ENCODE measurements at regions of chr11 and their contacts with region 1.

Region 1: DNA sequence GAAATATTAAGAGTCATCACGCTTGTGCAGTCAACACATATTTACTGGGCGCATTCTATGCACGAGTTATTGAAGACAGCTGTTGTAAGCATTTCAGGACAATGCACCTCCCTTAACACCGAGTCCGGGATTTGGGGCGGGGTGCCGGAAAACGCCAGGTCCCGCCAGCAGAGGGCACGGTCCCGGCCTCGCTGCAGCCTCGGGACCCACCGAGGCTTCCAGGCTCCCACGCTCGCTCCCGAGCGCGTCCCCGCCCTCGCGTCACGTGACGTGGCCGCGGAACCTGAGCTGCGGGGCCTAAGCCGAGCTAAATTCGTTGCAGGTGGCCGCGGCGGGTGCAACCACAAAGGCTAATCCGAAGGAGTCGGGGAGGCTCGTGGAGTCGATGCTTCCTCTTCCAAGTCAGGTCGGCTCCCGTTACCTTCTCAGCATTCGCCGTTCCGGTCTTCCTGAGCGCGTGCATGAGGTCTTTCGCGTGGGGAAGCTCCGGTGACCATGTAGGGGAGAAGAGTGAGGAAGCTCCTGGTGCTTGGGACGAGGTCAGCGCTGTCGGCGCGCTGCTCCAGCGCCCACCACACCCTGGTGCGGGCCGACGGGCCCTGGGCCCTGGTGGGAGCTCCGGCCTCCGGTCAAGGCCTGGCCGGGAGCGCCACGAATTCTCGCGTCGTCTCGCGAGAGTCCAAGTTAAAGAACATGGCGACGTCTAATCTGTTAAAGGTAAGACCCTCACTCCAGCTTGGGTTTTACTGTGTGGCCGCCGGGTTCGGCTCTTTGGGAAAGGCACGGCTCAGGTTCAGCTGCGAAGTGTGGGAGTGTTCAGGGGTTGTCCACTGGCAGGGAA is at the start of gene CUL5:
- DNase-seq: peak; percentile 53 to 93
- H3K4me3 ChIP-seq: peak within 1 kb of the TSS; percentile 80 to 84
- H3K27ac ChIP-seq: peak within 1 kb of the TSS; percentile 97 to 99
- H3K4me1 ChIP-seq: peaks cover 4 to 10% of the 10 kb centered on the region in 2 donors
- H3K27me3 ChIP-seq: no peaks in the 10 kb centered on the region
- CTCF ChIP-seq: peak; percentile 79 to 95 (median 85)
- total RNA-seq, gene CUL5: 6.0 TPM

Region 2: DNA sequence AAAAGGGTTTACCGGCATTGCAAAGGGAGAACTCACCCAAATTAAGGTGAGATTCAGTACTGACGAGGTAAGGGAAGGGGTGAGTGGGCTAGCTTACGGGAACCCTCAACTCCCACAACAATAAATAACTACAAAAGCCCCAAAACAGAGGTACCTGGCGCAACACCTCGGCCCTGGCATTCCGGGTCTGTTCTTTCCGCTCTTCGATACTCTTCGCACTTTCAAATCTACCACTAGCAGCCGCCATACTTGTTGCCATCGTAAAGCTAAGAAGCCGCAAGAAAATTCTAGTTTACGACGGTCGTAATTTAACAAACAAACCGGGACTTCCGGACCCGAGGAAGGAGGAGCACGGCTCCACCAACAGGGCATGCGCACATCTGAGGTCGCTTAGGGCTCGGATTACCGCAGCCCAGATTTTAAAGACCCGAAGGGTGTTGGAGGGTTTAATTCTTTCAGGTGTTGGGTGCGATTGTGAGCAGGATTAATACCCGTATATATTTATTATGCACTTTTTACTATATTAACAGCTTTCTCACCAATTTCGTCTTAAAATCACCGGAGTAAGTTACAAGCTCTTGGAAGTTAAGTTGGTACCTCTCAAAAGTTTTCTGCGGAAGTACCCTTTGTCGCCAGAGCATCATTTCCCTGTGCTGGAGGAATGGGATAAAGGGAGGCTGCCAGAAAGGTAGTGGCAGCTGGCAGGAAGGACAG is 551.2 kb before region 1 on chr11 and contains the start of gene CWF19L2:
- intact Hi-C with region 1: loop called (anchors 2 kb)
- DNase-seq: peak; percentile 33 to 93
- H3K4me3 ChIP-seq: peak within 1 kb of the TSS; percentile 73 to 81
- H3K27ac ChIP-seq: peak within 1 kb of the TSS; percentile 74 to 75
- H3K4me1 ChIP-seq: no peaks in the 10 kb centered on the region
- H3K27me3 ChIP-seq: no peaks in the 10 kb centered on the region
- CTCF ChIP-seq: no peak
- total RNA-seq, gene CWF19L2: 10.2 TPM

Region 3: DNA sequence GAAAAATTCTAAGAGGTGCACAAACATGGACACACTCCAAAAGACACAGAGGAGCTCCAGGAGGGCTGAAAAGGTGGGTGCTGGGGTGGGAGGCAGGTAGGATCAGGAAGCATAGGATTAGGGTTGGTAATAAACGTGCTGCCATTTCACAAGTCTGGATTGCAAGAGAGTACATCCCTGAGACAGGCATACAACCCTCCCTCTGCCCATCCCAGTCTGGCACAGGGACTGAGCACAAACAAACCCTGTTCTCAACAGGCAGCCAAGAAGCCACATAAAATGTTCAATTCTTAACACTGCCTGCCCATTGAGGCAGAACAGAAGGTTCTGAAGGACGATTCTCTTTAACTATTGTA is 168.8 kb before region 1 on chr11:
- intact Hi-C with region 1: loop called (anchors 5 kb)
- DNase-seq: no peak
- H3K4me3 ChIP-seq: peak overlapping the region in 1 of 2 donors; percentile 55
- H3K27ac ChIP-seq: peak overlapping the region; percentile 93
- H3K4me1 ChIP-seq: peaks cover 6 to 15% of the 10 kb centered on the region in 2 donors
- H3K27me3 ChIP-seq: no peaks in the 10 kb centered on the region
- CTCF ChIP-seq: no peak

Region 4: DNA sequence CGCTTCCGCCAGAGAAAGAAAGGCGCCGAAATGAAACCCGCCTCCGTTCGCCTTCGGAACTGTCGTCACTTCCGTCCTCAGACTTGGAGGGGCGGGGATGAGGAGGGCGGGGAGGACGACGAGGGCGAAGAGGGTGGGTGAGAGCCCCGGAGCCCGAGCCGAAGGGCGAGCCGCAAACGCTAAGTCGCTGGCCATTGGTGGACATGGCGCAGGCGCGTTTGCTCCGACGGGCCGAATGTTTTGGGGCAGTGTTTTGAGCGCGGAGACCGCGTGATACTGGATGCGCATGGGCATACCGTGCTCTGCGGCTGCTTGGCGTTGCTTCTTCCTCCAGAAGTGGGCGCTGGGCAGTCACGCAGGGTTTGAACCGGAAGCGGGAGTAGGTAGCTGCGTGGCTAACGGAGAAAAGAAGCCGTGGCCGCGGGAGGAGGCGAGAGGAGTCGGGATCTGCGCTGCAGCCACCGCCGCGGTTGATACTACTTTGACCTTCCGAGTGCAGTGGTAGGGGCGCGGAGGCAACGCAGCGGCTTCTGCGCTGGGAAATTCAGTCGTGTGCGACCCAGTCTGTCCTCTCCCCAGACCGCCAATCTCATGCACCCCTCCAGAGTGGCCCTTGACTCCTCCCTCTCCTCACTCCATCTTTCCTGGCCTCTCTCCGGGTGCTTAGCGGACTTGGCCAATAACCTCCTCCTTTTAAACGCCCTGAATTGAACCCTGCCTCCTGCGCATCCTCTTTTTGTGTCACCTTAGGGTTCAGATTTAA is 214.0 kb after region 1 on chr11 and contains the start of gene ATM:
- intact Hi-C with region 1: loop called (anchors 2 kb)
- DNase-seq: peak; percentile 97 to 99
- H3K4me3 ChIP-seq: peak within 1 kb of the TSS; percentile 80 to 85
- H3K27ac ChIP-seq: peak within 1 kb of the TSS; percentile 92 to 97
- H3K4me1 ChIP-seq: peaks cover 0 to 13% of the 10 kb centered on the region in 2 donors
- H3K27me3 ChIP-seq: no peaks in the 10 kb centered on the region
- CTCF ChIP-seq: peak; percentile 56 to 76 (median 74)
- total RNA-seq, gene ATM: 16.0 TPM

Region 5: GRCh38 chr11:108664730-108665525 is 656.1 kb after region 1 on chr11 and contains the start of gene DDX10:
- intact Hi-C with region 1: loop called (anchors 10 kb)
- DNase-seq: peak; percentile 87 to 99
- H3K4me3 ChIP-seq: peak within 1 kb of the TSS; percentile 63 to 88
- H3K27ac ChIP-seq: peak within 1 kb of the TSS; percentile 37 to 65
- H3K4me1 ChIP-seq: peaks cover 8 to 21% of the 10 kb centered on the region in 2 donors
- H3K27me3 ChIP-seq: no peaks in the 10 kb centered on the region
- CTCF ChIP-seq: no peak
- total RNA-seq, gene DDX10: 21.9 TPM